Gastrocnemius medialis (tissue), 4 donors: ENCODE measurements at regions of chr11 and their contacts with region 1.

Region 1: DNA sequence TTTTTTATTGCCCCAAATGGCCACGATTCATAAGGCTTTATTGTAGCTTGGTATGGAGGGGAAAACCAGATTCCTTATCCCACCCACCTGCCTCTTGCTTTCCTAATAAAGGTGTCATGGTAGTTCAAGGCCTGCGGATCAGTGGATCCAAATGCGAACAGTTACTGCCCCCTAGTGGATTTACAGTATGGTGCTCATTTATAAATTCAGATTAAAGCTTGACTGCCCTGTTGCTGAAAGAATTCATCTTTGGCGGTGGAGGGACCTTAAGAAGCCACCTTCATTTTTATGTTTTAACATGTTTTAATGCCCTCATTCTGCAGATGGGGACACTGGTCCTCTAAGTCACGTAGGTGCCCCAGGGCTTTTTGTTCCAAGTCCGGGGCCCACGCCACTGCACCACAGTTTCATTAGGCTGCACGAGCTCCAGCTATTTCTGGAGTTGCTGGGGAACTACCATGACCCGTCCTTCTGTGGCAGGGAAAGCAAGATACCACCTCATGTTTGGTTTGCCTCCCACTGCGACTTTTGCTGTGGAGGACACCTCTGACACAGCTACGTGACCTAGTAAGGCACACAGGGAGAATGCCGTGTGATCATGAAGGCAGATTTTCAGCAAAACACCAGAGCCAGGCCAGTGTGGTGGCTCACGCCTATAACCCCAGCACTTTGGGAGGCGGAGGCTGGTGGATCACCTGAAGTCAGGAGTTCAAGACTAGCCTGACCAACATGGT is 15.6 kb upstream of the INCENP start:
- DNase-seq: no peak
- ATAC-seq: peak; percentile 42 to 79
- H3K4me3 ChIP-seq: no peak overlapping the region
- H3K27ac ChIP-seq: no peak overlapping the region
- H3K4me1 ChIP-seq: peaks cover 15 to 16% of the 10 kb centered on the region in 2 donors
- H3K27me3 ChIP-seq: no peaks in the 10 kb centered on the region
- CTCF ChIP-seq: peak; percentile 52 to 88 (median 83)
- POLR2A ChIP-seq: no peak

Region 2: DNA sequence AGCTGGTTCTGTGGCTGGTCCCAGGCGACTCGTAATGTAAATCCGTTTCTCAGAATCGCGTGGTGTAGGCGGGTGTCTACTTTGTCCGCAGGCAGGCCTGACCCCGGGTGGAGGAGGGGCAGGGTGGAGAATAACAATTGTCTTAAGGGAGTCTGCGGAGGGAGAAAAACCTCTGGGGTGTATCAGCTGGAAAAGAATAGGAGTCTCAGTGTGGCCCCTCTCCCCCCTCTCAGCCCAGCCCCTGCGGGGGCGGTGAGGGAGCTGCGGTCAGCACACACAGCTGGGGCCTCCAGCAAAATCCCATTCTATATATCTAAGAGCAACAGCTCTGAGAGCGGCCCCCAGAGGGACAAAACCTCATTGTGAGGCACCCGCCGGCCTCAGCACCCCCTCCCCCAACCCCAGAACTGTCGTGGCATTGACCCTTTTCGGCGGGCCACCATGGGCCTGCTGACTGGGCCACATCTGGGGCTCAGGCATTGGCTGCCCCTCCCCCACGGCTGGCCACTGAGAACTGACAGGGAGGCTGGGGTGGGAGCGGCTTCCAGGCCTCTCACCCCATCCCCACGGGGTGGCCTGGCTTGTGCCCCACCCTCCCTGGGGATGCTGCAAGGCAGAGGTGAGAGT is 358.5 kb before region 1 on chr11:
- in situ Hi-C with region 1: no loop called
- intact Hi-C with region 1: loop called (anchors 2 kb)
- DNase-seq: no peak
- ATAC-seq: no peak
- H3K4me3 ChIP-seq: no peak overlapping the region
- H3K27ac ChIP-seq: no peak overlapping the region
- H3K4me1 ChIP-seq: no peaks in the 10 kb centered on the region
- H3K27me3 ChIP-seq: peaks cover 5 to 11% (median 9%) of the 10 kb centered on the region in 3 donors
- CTCF ChIP-seq: no peak
- POLR2A ChIP-seq: no peak

Region 3: GRCh38 chr11:61871158-61871597 is 237.0 kb before region 1 on chr11:
- in situ Hi-C with region 1: loop called in 1 of 4 experiments (anchors 10 kb)
- intact Hi-C with region 1: loop called (anchors 2 kb)
- DNase-seq: peak; percentile 47 to 62
- ATAC-seq: peak; percentile 87 to 88
- H3K4me3 ChIP-seq: no peak overlapping the region
- H3K27ac ChIP-seq: peak overlapping the region; percentile 48 to 70 (median 66)
- H3K4me1 ChIP-seq: peaks cover 0 to 5% of the 10 kb centered on the region in 2 donors
- H3K27me3 ChIP-seq: no peaks in the 10 kb centered on the region
- CTCF ChIP-seq: peak; percentile 87 to 96 (median 93)
- POLR2A ChIP-seq: no peak